ENCODE measurements at regions of chr6 and their contacts with region 1.

Region 1: DNA sequence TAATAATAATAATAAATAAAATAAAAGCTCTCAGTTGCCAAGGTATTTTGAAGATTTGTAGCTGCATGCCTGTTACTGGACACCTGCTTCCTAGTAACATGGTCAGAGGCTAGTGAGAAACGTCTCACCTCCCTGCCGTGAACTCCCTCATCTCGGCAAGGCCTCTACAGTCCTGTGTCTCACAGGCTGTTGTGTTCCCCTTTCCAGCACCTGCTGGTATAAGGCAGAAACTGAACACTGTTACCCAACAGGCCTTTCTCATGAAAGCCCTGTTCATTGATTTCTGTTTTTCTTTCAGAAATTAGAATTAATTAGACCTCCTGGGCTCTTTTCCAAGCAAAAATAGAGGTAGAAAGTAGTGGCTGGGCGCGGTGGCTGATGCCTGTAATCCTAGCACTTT is 17.6 kb upstream of the SRSF3 start:
- DNase-seq: no peak
- ATAC-seq: no peak
- H3K4me3 ChIP-seq: no peak overlapping the region
- H3K27ac ChIP-seq: peak overlapping the region; percentile 30; the same call in 1 of the 2 replicates
- H3K4me1 ChIP-seq: peaks cover 27 to 46% of the 10 kb centered on the region in 2 experiments
- H3K27me3 ChIP-seq: no peaks in the 10 kb centered on the region
- CTCF ChIP-seq: no peak
- POLR2A ChIP-seq: no peak
- RAD21 ChIP-seq: no peak

Region 2: DNA sequence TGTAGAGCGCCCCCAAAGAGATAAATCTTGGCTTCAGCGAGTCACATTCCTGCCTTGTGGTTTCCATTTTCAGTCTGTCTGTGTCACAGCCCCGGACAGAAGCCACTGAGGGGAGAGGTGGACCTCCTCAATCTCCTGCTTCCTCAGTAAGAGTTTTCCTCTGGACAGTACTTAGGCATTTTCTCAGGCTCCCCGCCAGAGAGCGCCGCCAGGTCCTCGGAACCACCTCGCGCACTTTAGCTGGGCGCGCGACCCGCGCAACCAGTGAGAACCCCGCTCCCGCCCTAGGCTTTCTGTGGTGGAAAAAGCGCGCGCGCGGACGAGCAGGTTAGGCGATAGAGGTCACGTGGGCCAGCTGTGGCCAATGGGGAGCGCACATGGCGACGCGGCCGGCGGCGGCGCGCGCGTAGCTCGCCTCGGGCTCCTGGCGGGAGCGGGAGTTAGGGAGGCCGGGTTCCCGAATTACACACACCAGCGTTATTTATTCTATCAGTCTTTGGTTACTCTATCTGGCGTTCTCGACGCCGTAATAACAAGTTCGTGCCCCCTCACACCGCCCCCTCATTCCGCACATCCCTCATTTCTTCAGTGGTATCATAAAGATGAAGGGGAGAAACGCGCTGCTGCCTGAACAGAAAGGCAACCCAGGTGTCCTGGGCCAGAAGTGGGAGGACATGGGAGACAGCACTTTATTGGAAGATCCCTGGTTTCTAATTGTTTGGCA is 153.3 kb before region 1 on chr6:
- CTCF ChIA-PET with region 1: interaction called, 3 read pairs
- POLR2A ChIA-PET with region 1: no interaction called
- RAD21 ChIA-PET with region 1: no interaction called
- intact Hi-C with region 1: loop called (anchors 1 kb)
- DNase-seq: peak; percentile 95
- ATAC-seq: peak; percentile 97
- H3K4me3 ChIP-seq: peak overlapping the region; percentile 33 to 49
- H3K27ac ChIP-seq: no peak overlapping the region
- H3K4me1 ChIP-seq: peaks cover 6 to 26% of the 10 kb centered on the region in 2 experiments; a peak in 3 of 4 replicates
- H3K27me3 ChIP-seq: no peaks in the 10 kb centered on the region
- CTCF ChIP-seq: peak; percentile 58 to 73 (median 61)
- POLR2A ChIP-seq: peak; percentile 63
- RAD21 ChIP-seq: peak; percentile 83

Region 3: GRCh38 chr6:36897609-36898008 is 321.0 kb after region 1 on chr6:
- CTCF ChIA-PET with region 1: no interaction called
- POLR2A ChIA-PET with region 1: no interaction called
- RAD21 ChIA-PET with region 1: no interaction called
- intact Hi-C with region 1: no loop called
- DNase-seq: no peak
- ATAC-seq: peak; percentile 90
- H3K4me3 ChIP-seq: no peak overlapping the region
- H3K27ac ChIP-seq: no peak overlapping the region
- H3K4me1 ChIP-seq: no peaks in the 10 kb centered on the region
- H3K27me3 ChIP-seq: no peaks in the 10 kb centered on the region
- CTCF ChIP-seq: peak; percentile 23 to 41 (median 38); a peak in 3 of 6 replicates
- POLR2A ChIP-seq: no peak
- RAD21 ChIP-seq: peak; percentile 56

Measured in HCT116 (cell line).